CD14-positive monocyte (primary cell): ENCODE measurements at regions of chr6 and their contacts with region 1.

Region 1: GRCh38 chr6:136289579-136290409 is at the start of gene BCLAF1:
- DNase-seq: peak; percentile 100
- H3K4me3 ChIP-seq: peak within 1 kb of the TSS; percentile 75 to 81 (median 76)
- H3K4me3 Mint-ChIP-seq: peak within 1 kb of the TSS; percentile 96 to 100
- H3K27ac ChIP-seq: peak within 1 kb of the TSS; percentile 99 to 100
- H3K27ac Mint-ChIP-seq: peak within 1 kb of the TSS; percentile 100
- H3K4me1 ChIP-seq: peaks cover 32 to 53% of the 10 kb centered on the region in 2 donors
- H3K4me1 Mint-ChIP-seq: peaks cover 45% of the 10 kb centered on the region
- H3K27me3 ChIP-seq: no peaks in the 10 kb centered on the region
- H3K27me3 Mint-ChIP-seq: peaks cover 0 to 3% (median 0%) of the 10 kb centered on the region in 3 donors
- CTCF ChIP-seq: no peak
- polyA plus RNA-seq, gene BCLAF1: 32.5 to 75.8 (median 47.0) TPM

Region 2: GRCh38 chr6:136249811-136250685 is 39.7 kb before region 1 on chr6 and contains the start of gene MTFR2:
- intact Hi-C with region 1: loop called in 1 of 2 experiments (anchors 5 kb)
- DNase-seq: peak; percentile 98 to 100 (median 99)
- H3K4me3 ChIP-seq: peak within 1 kb of the TSS; percentile 79 to 99 (median 86)
- H3K4me3 Mint-ChIP-seq: peak within 1 kb of the TSS; percentile 96 to 98
- H3K27ac ChIP-seq: peak within 1 kb of the TSS; percentile 7 to 73
- H3K27ac Mint-ChIP-seq: peak within 1 kb of the TSS; percentile 75 to 90 (median 87)
- H3K4me1 ChIP-seq: peaks cover 16 to 22% of the 10 kb centered on the region in 2 donors
- H3K4me1 Mint-ChIP-seq: peaks cover 34% of the 10 kb centered on the region
- H3K27me3 ChIP-seq: no peaks in the 10 kb centered on the region
- H3K27me3 Mint-ChIP-seq: peaks cover 0 to 1% (median 0%) of the 10 kb centered on the region in 3 donors
- CTCF ChIP-seq: no peak
- polyA plus RNA-seq, gene MTFR2: 0.41 to 0.79 (median 0.60) TPM